Natural killer cell (primary cell): ENCODE measurements at regions of chr7 and their contacts with region 1.

Region 1: GRCh38 chr7:21338728-21339164 is 89.1 kb upstream of the SP4 start:
- DNase-seq: peak; percentile 27 to 65
- ATAC-seq: peak; percentile 88 to 97 (median 96)
- H3K4me3 ChIP-seq: no peak overlapping the region
- H3K4me3 Mint-ChIP-seq: peak overlapping the region; percentile 72
- H3K27ac ChIP-seq: peak overlapping the region; percentile 65
- H3K27ac Mint-ChIP-seq: peak overlapping the region; percentile 88 to 94
- H3K4me1 ChIP-seq: peaks cover 12% of the 10 kb centered on the region
- H3K4me1 Mint-ChIP-seq: peaks cover 60 to 66% of the 10 kb centered on the region in 2 donors
- H3K27me3 ChIP-seq: no peaks in the 10 kb centered on the region
- H3K27me3 Mint-ChIP-seq: no peaks in the 10 kb centered on the region
- CTCF ChIP-seq: no peak

Region 2: DNA sequence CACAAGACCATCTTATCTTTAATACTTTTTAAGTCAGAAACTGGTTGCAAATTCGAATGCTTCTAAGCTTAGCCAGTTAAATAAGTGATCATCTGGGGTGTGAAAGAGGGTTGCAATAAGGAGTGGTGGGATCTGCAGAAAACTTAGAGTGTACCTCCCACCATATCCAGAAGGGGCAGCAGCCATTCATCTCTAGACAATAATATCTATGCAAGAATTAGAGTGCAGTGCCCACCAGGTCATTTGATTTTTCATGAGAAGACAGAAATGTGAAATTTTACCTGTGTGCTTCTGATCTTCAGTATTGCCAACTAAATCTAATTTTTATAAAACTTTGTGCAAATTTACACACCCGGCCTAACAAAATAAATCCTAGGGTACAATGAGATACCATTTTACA is 38.1 kb before region 1 on chr7:
- intact Hi-C with region 1: no loop called
- DNase-seq: peak in 1 of 2 donors; percentile 29
- ATAC-seq: no peak
- H3K4me3 ChIP-seq: no peak overlapping the region
- H3K4me3 Mint-ChIP-seq: no peak overlapping the region
- H3K27ac ChIP-seq: no peak overlapping the region
- H3K27ac Mint-ChIP-seq: no peak overlapping the region
- H3K4me1 ChIP-seq: no peaks in the 10 kb centered on the region
- H3K4me1 Mint-ChIP-seq: no peaks in the 10 kb centered on the region
- H3K27me3 ChIP-seq: no peaks in the 10 kb centered on the region
- H3K27me3 Mint-ChIP-seq: no peaks in the 10 kb centered on the region
- CTCF ChIP-seq: peak; percentile 31

Region 3: GRCh38 chr7:21371360-21371759 is 32.6 kb after region 1 on chr7:
- intact Hi-C with region 1: loop called (anchors 5 kb)
- DNase-seq: no peak
- ATAC-seq: no peak
- H3K4me3 ChIP-seq: no peak overlapping the region
- H3K4me3 Mint-ChIP-seq: no peak overlapping the region
- H3K27ac ChIP-seq: no peak overlapping the region
- H3K27ac Mint-ChIP-seq: no peak overlapping the region
- H3K4me1 ChIP-seq: no peaks in the 10 kb centered on the region
- H3K4me1 Mint-ChIP-seq: peaks cover 3 to 9% of the 10 kb centered on the region in 2 donors
- H3K27me3 ChIP-seq: no peaks in the 10 kb centered on the region
- H3K27me3 Mint-ChIP-seq: no peaks in the 10 kb centered on the region
- CTCF ChIP-seq: no peak